ENCODE measurements at regions of chr2 and their contacts with region 1.

Region 1: DNA sequence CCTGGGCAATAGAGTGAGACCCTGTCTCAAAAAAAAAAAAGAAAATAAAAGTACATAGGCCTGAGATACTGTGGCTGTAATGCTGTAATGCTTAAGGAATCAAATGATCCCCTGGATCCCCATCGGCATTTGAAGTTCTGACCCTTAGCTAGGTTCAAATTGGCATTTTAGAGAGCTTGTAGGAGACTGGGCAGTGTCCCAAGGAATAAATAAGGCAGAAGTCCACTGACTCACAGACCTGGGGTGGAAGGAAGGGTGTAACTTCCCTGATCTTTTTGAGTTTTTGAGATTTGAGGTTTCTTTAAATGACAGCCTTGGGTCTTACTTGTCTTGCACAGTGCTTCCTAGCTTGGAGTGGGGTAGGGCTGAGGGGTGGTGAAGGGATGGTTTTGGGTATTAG is 553.7 kb downstream of the SLC4A3 start:
- DNase-seq: no peak
- ATAC-seq: no peak
- H3K4me3 Mint-ChIP-seq: no peak overlapping the region
- H3K27ac Mint-ChIP-seq: no peak overlapping the region
- H3K4me1 Mint-ChIP-seq: no peaks in the 10 kb centered on the region
- H3K27me3 Mint-ChIP-seq: no peaks in the 10 kb centered on the region

Region 2: DNA sequence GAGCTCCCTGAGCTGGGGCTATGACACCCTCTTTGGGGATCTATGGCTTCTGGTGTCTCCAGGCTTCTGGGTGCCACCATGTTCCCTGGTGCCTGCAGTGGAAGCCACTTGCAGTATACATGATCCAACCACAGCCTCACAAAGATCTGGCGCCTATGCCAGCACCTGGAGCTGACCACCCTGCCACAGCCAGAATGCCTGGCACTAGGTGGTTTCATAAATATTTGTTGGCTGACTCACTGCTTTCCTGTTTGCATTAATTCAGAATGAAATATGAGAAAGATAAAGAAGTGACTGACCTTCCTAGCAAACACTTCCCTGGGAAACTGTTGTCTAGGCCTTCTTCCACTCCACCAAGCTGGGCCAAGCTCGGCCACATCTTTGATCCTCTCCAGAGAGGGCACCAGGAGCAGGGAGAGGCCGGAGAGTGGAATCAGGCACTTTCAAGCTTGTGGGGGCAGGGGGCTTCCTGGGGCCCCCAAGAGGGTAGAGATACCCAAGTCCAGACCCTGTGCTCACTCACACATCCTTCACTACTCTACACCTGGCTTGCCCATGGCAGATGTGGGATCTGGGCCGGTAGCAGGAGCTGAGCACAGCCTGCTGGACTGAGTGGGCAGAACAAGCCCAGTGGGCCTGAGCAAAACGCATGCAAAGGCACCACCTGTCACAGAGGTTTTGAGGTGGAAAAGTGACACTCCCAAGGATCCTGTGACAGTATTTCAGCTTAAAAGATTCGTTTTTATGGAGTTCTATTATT is 12.0 kb after region 1 on chr2:
- CTCF ChIA-PET with region 1: no interaction called
- POLR2A ChIA-PET with region 1: no interaction called
- intact Hi-C with region 1: loop called in 1 of 2 experiments (anchors 1 kb)
- DNase-seq: no peak
- ATAC-seq: no peak
- H3K4me3 Mint-ChIP-seq: no peak overlapping the region
- H3K27ac Mint-ChIP-seq: no peak overlapping the region
- H3K4me1 Mint-ChIP-seq: no peaks in the 10 kb centered on the region
- H3K27me3 Mint-ChIP-seq: no peaks in the 10 kb centered on the region